ENCODE measurements at regions of chr22 and their contacts with region 1.

Region 1: DNA sequence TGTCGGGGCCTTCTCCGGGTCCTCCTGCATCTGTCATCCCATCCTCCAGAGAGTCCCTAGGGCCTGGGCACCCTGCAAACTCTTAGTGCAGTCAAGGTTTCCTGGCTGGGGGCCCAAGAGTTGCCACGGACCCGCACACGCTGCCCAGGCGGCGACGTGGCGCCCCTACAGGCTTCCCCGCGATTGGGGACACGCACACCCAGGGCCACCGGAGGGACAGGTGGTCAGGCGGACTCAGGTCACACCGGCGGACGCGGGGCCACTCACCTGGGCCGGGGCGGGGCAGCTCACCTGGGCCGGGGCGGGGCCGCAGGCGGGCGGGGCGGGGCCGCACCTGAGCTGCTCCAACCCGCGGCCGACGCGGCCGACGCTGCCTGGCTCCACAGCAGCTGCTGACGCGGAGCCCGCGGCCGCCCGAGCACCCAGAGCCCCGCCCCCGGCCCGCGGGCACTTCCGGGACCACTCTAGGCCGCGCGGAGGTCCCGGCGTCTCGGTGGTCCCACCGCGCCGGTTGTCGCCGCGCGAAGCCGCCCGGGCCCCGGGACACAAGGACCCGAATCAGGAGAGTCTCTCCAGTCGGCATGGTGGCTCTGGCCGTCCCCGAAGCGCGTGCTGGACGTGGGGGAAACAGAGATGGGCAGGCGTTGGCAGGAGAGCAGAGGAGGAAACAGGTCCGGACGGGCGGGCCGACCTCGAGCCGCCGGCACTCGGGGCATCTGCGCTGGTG is at the start of gene ZNF70:
- DNase-seq: peak; percentile 79 to 93 (median 86)
- ATAC-seq: peak; percentile 94 to 99
- H3K4me3 Mint-ChIP-seq: peak within 1 kb of the TSS; percentile 78 to 90 (median 84)
- H3K27ac Mint-ChIP-seq: peak within 1 kb of the TSS; percentile 69 to 94 (median 88)
- H3K4me1 Mint-ChIP-seq: peaks cover 9 to 39% (median 14%) of the 10 kb centered on the region in 4 donors
- H3K27me3 Mint-ChIP-seq: no peaks in the 10 kb centered on the region
- polyA plus RNA-seq, gene ZNF70: 0.20 to 0.57 (median 0.47) TPM

Region 2: DNA sequence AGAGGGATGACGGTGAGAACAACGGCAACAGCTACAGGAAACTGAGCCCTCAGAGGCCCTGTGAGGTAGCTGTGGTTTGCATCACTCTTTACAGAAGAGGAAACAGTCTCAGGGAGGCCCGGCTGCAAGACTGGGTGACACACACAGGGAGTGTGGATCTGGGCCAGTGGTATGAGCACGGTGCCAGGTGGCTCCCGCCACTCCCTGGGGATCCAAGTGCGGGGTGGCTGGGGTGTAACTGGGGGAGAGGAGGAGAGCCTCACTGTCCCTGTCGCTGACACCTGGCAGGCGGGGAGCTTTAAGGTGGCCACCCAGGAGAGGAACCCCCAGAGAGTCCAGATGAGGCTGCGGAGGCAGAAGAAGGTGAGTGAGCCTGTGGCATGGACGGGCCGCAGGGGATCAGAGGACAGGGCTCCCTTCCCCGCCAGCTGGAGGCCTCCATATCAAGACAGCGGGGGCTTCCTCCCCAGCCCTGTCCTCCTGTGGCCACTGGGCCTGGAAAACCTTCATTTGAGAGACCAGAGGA is 54.5 kb before region 1 on chr22:
- POLR2A ChIA-PET with region 1: interaction called, 13 read pairs
- DNase-seq: peak; percentile 51 to 92 (median 82)
- ATAC-seq: peak; percentile 99
- H3K4me3 Mint-ChIP-seq: peak overlapping the region; percentile 92 to 100 (median 99)
- H3K27ac Mint-ChIP-seq: peak overlapping the region; percentile 100
- H3K4me1 Mint-ChIP-seq: peaks cover 26 to 74% (median 47%) of the 10 kb centered on the region in 4 donors
- H3K27me3 Mint-ChIP-seq: no peaks in the 10 kb centered on the region

Region 3: DNA sequence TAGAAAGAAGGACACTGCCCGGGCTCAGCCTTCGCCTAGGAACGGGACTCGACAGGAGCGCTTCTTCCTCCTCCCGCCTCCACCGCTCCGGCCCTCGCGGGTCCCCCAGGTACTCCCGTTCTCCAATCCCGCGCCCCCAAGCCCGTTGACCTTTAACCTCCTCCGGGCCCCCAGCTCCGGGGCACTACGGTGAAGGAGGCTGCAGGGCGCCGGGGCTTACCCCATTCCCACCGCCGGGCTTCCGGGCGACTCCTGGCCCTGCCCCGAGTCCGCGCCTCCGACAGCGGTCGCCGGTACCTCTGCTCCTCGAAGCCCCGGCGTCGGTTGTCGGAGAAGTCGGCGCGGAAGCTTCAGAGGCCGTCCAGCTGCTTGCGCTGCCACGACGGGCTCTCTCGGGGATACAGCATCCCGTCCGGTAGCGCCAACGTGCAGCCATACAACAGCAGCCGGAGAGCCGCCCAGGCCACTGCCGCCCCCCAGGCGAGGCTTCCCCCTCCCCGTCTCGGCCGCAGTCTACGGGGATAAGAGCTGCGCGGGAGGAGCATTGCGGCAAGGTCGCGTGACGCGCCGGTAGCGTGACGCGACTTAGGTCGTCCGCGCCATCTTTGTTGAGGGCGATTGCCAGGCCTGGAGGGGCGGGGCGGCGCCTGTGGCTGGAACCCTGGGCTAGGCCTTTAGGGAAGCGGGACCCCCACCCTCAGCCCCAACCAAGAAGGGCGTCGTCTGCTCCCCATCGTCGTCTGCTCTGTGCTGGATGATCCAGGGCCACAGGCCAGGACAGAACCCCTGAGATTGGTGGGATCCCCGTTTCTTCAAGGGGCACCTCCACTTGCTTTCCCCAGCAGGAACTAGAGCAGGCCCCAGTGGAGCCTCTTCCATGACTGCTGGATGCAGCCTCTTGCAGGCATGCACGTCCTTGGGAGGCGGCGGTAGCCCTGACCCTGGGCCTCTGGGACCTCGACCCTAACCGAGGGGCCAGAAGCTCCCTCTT is 33.8 kb before region 1 on chr22:
- POLR2A ChIA-PET with region 1: interaction called, 10 read pairs
- DNase-seq: peak; percentile 74 to 90 (median 81)
- ATAC-seq: peak; percentile 96
- H3K4me3 Mint-ChIP-seq: peak overlapping the region; percentile 75 to 91 (median 80)
- H3K27ac Mint-ChIP-seq: peak overlapping the region; percentile 71 to 94 (median 92)
- H3K4me1 Mint-ChIP-seq: peaks cover 12 to 32% (median 26%) of the 10 kb centered on the region in 4 donors
- H3K27me3 Mint-ChIP-seq: no peaks in the 10 kb centered on the region

Region 4: DNA sequence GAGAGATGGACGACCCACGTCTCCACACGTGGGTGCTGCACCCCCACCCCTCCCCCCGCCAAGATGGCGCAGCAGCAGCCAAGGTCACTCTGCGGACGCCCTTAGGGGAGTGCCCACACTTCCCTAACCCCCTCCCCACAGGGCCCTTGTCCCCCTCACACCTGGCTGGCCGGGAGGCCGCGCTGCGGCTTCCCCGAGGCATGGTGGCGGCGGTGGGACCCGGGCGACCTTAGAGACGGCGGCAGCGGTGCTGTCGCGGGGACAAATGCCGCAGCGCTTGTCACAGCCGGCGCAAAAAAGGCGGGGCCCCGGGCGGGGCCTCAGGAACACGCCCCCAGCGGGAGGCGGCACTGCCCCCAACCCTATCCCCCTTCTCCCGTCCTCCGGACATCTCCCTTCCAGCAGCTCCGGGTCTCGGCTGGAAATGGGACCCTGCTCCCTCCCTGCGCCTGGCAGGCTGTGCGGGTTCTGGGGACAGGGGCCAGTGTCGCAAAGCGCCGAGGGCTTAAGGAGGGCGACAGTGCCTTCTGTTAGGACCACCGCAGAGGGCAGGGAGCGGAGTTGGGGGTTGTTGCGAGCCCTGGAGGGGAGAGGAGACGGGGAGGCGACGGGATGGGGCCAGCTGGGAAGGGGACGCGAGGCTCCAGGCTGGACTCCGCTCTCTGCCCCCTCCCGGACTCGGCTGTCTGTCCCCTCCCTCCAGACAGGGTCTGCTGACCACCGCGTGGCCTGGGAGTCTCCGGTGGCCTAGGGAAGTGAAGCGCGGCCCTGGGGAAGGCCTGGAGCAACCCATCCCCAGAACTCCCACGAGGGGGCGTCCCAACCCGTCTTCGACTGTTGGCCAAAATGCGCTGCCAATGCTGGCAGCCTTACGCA is 17.0 kb after region 1 on chr22 and contains the start of gene CHCHD10:
- POLR2A ChIA-PET with region 1: interaction called, 19 read pairs
- DNase-seq: peak; percentile 59 to 83 (median 75)
- ATAC-seq: peak; percentile 67 to 70
- H3K4me3 Mint-ChIP-seq: peak within 1 kb of the TSS; percentile 80 to 90 (median 83)
- H3K27ac Mint-ChIP-seq: peak within 1 kb of the TSS; percentile 58 to 92 (median 75)
- H3K4me1 Mint-ChIP-seq: peaks cover 13 to 67% (median 55%) of the 10 kb centered on the region in 4 donors
- H3K27me3 Mint-ChIP-seq: no peaks in the 10 kb centered on the region
- polyA plus RNA-seq, gene CHCHD10: 26.1 to 37.6 (median 36.0) TPM

Region 5: GRCh38 chr22:23786752-23787599 is 36.1 kb after region 1 on chr22 and contains the start of gene SMARCB1:
- POLR2A ChIA-PET with region 1: interaction called, 11 read pairs
- DNase-seq: peak; percentile 75 to 93 (median 88)
- ATAC-seq: peak; percentile 75 to 77
- H3K4me3 Mint-ChIP-seq: peak within 1 kb of the TSS; percentile 85 to 94 (median 90)
- H3K27ac Mint-ChIP-seq: peak within 1 kb of the TSS; percentile 76 to 98 (median 96)
- H3K4me1 Mint-ChIP-seq: peaks cover 21 to 59% (median 45%) of the 10 kb centered on the region in 4 donors
- H3K27me3 Mint-ChIP-seq: no peaks in the 10 kb centered on the region
- polyA plus RNA-seq, gene SMARCB1: 33.3 to 45.0 (median 35.0) TPM

Measured in naive thymus-derived CD8-positive, alpha-beta T cell (primary cell).